Activated CD8-positive, alpha-beta T cell treated with anti-CD3 and anti-CD28 coated beads, Interleukin-2, amount 10 ng/mL, durations not matched to agents 7 days and 5 days (primary cell): ENCODE measurements at regions of chr16 and their contacts with region 1.

Region 1: DNA sequence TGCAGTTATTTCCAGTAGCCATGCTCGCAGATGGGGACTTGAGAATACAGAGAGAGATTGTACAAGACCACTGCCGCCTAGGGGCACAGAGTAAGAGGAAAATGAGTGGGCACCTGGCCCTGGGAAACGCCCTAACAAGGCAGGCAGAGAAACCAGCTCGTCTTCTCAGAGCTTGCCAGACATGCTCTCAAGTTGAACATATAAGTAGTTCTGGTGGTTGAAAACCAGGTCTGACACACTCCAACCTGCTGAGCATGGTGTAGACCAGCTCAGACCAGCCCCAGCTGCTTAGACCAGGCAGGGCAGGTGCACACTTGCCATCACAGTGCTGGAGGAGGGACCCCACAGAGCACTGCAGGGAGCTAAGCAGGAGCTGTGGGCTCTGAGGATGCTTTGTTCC is 250.5 kb downstream of the CPPED1 start:
- DNase-seq: no peak
- ATAC-seq: no peak
- H3K4me3 Mint-ChIP-seq: no peak overlapping the region
- H3K27ac Mint-ChIP-seq: no peak overlapping the region
- H3K4me1 Mint-ChIP-seq: peaks cover 17% of the 10 kb centered on the region
- H3K27me3 Mint-ChIP-seq: no peaks in the 10 kb centered on the region

Region 2: GRCh38 chr16:12535535-12536411 is 17.4 kb before region 1 on chr16:
- CTCF ChIA-PET with region 1: interaction called, 3 read pairs
- POLR2A ChIA-PET with region 1: interaction called, 15 read pairs
- DNase-seq: peak; percentile 49
- ATAC-seq: peak; percentile 62
- H3K4me3 Mint-ChIP-seq: peak overlapping the region; percentile 9
- H3K27ac Mint-ChIP-seq: peak overlapping the region; percentile 84
- H3K4me1 Mint-ChIP-seq: peaks cover 77% of the 10 kb centered on the region
- H3K27me3 Mint-ChIP-seq: no peaks in the 10 kb centered on the region